Mammary epithelial cell (primary cell): ENCODE measurements at regions of chr3 and their contacts with region 1.

Region 1: DNA sequence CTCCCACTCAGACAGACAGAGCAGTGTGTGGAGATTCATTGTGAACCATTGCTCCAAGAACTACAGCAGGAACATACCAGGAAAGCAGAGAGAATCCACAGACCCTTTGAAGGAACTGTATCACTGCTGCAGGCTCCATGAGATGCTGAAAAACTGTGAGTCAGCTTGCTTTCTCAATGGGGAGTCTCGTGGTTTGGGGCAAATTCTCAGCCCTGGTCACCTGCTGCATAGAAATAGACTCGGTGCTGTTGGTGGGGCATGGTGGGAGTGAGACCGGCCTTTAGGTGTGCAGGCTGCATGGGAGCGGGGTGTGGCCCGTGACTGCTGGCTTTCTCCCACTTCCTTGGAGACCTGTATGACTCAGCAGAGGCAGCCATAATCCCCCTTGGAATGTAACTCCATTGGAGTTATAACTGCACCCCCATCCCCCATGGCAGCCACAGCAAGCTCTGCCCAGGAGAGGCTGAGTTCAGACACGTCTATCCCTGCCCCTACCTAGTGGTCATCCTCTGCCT is 35.6 kb downstream of the ALCAM start:
- DNase-seq: peak; percentile 98
- H3K4me3 ChIP-seq: peak overlapping the region in 2 of 3 experiments; percentile 17 to 29
- H3K27ac ChIP-seq: peak overlapping the region; percentile 98
- H3K4me1 ChIP-seq: peaks cover 27% of the 10 kb centered on the region
- H3K27me3 ChIP-seq: no peaks in the 10 kb centered on the region
- CTCF ChIP-seq: no peak

Region 2: DNA sequence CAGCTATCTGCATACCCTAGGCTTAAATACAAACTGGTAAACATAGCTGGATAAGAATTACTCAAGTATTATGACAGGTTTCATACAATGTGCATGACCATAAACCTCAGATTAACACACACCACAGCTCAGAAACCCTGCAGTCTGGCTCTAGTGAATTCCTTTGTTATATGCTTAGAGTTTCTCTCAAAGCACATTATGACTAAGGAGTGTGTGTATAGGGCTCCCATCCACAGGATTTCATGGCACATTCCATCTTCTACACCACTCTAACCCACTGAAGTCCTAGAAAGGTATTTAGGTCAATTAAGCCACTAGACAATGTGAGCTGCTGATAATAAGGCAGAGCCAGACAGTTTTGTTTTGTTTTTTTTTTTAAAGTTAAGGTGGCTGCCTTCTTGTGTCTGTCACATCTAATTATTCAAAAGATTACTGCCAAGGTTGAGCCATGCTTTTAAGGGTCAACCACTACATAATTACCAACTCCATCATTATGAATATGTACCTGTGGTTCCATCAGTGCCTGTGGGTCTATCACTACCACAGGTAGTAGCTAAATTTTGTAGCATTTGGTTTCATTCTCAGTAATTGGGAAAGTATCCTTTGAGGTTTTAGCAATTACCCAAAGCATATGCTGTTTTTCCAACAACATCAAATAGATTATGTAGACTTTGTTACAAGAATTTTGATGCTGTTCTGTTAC is 71.3 kb after region 1 on chr3:
- CTCF ChIA-PET with region 1: no interaction called
- dilution Hi-C with region 1: no loop called
- in situ Hi-C with region 1: no loop called
- intact Hi-C with region 1: loop called (anchors 5 kb)
- DNase-seq: peak; percentile 90
- H3K4me3 ChIP-seq: no peak overlapping the region
- H3K27ac ChIP-seq: peak overlapping the region; percentile 55
- H3K4me1 ChIP-seq: peaks cover 5% of the 10 kb centered on the region
- H3K27me3 ChIP-seq: no peaks in the 10 kb centered on the region
- CTCF ChIP-seq: no peak